Aorta (tissue), 5 donors: ENCODE measurements at regions of chr14 and their contacts with region 1.

Region 1: DNA sequence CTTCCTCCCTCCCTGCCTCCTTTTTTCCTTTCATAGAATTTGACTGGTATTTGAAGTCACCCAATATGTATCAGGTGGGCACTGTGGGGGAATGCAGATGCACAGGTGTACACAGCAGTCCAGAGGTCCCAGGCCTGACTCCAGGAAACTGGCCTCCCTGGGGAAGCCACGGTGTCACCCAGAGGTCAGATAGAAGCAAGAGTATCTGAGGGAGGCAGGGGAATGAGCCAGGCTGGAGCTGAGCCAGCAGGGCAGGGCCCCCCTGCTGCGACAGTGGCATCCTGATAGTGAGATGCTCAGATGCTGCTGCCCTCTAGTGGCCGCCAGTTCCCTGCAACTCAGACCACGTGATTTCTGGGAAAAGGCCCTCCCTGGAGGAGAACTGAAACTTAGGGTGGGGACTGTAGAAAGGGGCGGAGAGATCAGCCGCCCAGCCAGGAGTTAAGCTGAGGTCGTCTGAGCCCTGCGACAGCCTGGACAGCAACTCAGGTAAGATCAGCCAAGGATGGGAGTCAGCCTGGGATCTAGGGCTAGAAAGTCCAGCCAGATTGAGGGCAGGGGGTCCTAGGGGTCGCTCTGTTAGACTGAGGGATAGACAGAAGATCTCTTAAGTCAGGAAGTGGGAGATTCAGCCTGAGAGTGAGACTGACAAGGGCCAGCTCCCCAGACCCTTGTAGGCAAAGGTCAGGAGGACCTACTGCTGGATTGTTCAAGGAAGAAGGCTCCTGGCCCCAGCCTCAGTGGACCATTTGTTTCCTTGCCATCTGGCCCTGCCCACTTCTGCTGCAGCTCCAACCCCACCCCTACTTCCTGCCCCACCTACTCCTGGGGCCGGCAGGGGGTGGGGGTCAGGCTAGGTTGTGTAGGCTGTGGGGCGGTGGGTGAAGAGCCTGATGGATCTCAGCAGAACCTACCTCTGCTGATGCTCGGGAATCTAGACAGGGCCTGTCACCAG is at the start of gene IRF9:
- DNase-seq: peak; percentile 96 to 98
- ATAC-seq: peak; percentile 96
- H3K4me3 ChIP-seq: peak within 1 kb of the TSS; percentile 56 to 67
- H3K27ac ChIP-seq: peak within 1 kb of the TSS in 1 of 2 donors; percentile 73
- H3K4me1 ChIP-seq: no peaks in the 10 kb centered on the region
- H3K27me3 ChIP-seq: no peaks in the 10 kb centered on the region
- total RNA-seq, gene IRF9: 113 to 117 TPM

Region 2: DNA sequence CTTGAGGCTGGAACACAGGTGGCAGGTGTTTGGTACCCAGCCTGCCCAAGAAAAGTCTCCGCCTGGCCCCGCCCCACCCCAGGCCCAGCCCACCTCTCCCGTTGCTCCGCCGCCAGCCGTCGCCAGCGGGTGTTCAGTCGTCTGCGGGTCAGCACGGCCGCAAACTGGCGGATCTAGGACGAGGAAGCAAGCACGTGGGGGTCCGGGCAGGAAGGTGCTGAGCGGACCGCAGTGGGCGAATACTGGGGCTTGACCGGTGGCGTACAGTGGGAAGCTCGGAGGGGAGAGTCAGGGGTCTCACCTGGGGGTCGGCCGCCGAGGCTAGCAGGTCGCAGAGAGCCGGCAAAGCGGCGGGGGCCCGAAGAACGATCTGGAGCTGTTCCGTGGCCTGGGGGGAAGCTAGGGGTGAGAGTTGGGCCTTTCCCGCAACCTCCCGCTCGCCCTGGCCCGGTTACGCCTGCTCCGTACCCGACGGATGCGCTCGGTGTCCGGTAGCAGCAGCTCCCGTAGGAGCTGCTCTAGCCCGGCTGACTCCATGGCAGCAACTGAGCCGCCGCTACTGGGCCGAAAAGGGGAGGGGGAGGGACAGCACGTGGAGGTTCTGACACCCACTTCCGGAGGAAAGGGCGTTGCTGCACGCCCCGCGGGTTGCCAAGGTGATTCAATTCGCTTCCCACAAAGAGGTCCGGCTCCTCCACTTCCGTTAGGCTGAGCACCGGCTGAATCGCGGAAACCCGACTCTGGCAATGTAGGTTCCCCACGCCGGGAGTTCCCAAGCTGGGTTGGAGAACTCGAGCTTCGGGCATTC is 27.3 kb after region 1 on chr14 and contains the start of gene IPO4:
- intact Hi-C with region 1: loop called in 1 of 2 experiments (anchors 2 kb)
- DNase-seq: peak; percentile 97
- ATAC-seq: peak; percentile 97
- H3K4me3 ChIP-seq: peak within 1 kb of the TSS; percentile 44 to 61
- H3K27ac ChIP-seq: peak within 1 kb of the TSS in 1 of 2 donors; percentile 33
- H3K4me1 ChIP-seq: no peaks in the 10 kb centered on the region
- H3K27me3 ChIP-seq: no peaks in the 10 kb centered on the region
- total RNA-seq, gene IPO4: 23.4 to 29.3 TPM

Region 3: DNA sequence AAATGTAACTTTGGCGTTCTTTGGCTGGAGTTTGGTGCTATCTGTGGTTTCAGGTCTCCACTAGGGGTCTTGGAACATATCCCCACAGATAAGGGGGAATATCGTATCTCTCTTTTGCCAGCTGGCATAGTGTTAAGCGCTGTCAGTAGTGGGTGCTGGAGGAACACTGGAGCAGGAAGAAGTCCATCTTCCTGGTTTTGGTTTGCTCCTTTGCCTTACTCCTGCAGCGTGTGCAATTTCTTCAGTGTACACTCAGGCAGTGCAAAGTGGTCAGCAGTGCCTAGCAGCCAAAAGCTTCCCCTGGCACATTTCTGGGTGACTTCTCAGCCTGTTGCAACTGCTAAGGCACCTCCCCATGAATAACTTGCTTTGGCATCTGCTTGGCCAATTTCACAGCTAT is 190.4 kb after region 1 on chr14:
- intact Hi-C with region 1: no loop called
- DNase-seq: peak in 1 of 2 donors; percentile 54
- ATAC-seq: no peak
- H3K4me3 ChIP-seq: no peak overlapping the region
- H3K27ac ChIP-seq: no peak overlapping the region
- H3K4me1 ChIP-seq: no peaks in the 10 kb centered on the region
- H3K27me3 ChIP-seq: no peaks in the 10 kb centered on the region